Activated T-helper 2 cell treated with anti-CD3 and anti-CD28 coated beads, Interferon-gamma antibody, Interleukin-2, Interleukin-4, amounts not matched to agents 10 μg/mL and 5 μg/mL and 100 μg/mL, durations not matched to agents 14 hours and 24 hours and 36 hours (primary cell): ENCODE measurements at regions of chr14 and their contacts with region 1.

Region 1: GRCh38 chr14:97707603-97708002 is 910.4 kb downstream of the VRK1 start:
- DNase-seq: peak; percentile 22
- H3K4me3 Mint-ChIP-seq: no peak overlapping the region
- H3K27ac Mint-ChIP-seq: no peak overlapping the region
- H3K4me1 Mint-ChIP-seq: peaks cover 79% of the 10 kb centered on the region
- H3K27me3 Mint-ChIP-seq: no peaks in the 10 kb centered on the region

Region 2: DNA sequence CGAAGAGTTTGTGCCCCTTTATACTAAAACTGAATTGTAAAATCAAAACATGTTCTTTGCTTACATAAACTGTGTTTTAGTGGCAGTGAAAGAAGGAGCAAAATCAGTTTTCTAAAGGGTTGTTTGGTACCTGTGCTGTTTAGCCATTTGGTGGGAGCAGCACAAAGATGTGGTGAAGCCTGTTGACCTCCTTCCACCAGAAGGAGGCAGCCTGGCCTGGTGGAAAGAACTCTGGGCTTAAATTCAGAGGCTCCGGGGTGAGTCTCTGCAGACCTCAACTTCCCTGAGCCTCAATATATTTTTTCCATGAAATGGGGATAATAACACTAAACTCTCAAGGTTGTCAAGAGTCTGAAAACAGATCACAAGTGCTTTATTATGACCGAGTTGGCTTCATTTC is 407.9 kb before region 1 on chr14:
- intact Hi-C with region 1: loop called (anchors 10 kb)
- DNase-seq: no peak
- H3K4me3 Mint-ChIP-seq: no peak overlapping the region
- H3K27ac Mint-ChIP-seq: no peak overlapping the region
- H3K4me1 Mint-ChIP-seq: peaks cover 32% of the 10 kb centered on the region
- H3K27me3 Mint-ChIP-seq: peaks cover 13% of the 10 kb centered on the region

Region 3: GRCh38 chr14:97426776-97427282 is 280.8 kb before region 1 on chr14:
- intact Hi-C with region 1: no loop called
- DNase-seq: no peak
- H3K4me3 Mint-ChIP-seq: no peak overlapping the region
- H3K27ac Mint-ChIP-seq: no peak overlapping the region
- H3K4me1 Mint-ChIP-seq: peaks cover 2% of the 10 kb centered on the region
- H3K27me3 Mint-ChIP-seq: no peaks in the 10 kb centered on the region

Region 4: DNA sequence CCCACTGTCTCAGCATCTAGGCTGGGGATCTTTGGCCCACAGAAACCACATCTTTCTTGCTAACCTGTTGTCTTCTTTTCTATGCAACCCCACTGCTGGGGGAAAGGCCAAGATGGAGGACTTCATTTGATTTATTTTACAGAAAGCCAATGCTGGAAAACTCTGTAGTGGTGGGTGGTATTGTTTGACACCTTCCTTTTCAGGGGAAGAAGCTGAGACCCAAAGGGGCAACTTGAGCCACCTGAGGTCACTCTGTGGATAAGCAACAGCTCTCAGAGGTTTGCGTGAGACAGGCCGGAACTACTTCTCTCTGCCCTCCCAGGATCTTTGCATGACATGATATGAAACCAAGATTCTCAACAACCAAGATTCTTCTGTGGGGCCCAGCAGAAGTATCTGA is 265.2 kb before region 1 on chr14:
- intact Hi-C with region 1: loop called (anchors 2 kb)
- DNase-seq: peak; percentile 70
- H3K4me3 Mint-ChIP-seq: peak overlapping the region; percentile 65
- H3K27ac Mint-ChIP-seq: peak overlapping the region; percentile 98
- H3K4me1 Mint-ChIP-seq: peaks cover 79% of the 10 kb centered on the region
- H3K27me3 Mint-ChIP-seq: no peaks in the 10 kb centered on the region

Region 5: GRCh38 chr14:97602438-97603117 is 105.0 kb before region 1 on chr14:
- intact Hi-C with region 1: no loop called
- DNase-seq: peak; percentile 72
- H3K4me3 Mint-ChIP-seq: no peak overlapping the region
- H3K27ac Mint-ChIP-seq: no peak overlapping the region
- H3K4me1 Mint-ChIP-seq: peaks cover 29% of the 10 kb centered on the region
- H3K27me3 Mint-ChIP-seq: no peaks in the 10 kb centered on the region

Region 6: GRCh38 chr14:97634751-97635150 is 72.9 kb before region 1 on chr14:
- intact Hi-C with region 1: loop called (anchors 5 kb)
- DNase-seq: no peak
- H3K4me3 Mint-ChIP-seq: peak overlapping the region; percentile 74
- H3K27ac Mint-ChIP-seq: peak overlapping the region; percentile 53
- H3K4me1 Mint-ChIP-seq: peaks cover 41% of the 10 kb centered on the region
- H3K27me3 Mint-ChIP-seq: no peaks in the 10 kb centered on the region

Region 7: DNA sequence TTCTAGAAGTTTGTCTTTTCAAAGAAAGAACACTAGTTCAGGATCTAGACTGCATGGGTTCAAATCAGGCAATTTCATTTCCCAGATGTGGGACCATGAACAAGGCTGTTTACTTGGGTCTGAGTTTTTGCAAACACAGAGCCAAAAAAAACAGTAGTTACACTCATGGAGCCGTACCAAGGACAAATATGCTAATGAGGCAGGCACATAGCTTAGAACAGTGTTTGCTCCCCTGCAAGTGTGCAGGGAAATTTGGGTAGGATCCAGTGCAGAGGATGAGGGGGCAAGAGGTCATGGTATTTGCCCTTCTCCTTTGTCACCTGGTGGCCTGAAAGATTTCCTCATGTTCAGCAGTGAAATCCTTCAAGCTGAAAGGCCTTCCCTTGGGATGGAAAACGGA is 50.0 kb before region 1 on chr14:
- intact Hi-C with region 1: no loop called
- DNase-seq: no peak
- H3K4me3 Mint-ChIP-seq: no peak overlapping the region
- H3K27ac Mint-ChIP-seq: no peak overlapping the region
- H3K4me1 Mint-ChIP-seq: peaks cover 3% of the 10 kb centered on the region
- H3K27me3 Mint-ChIP-seq: no peaks in the 10 kb centered on the region

Region 8: DNA sequence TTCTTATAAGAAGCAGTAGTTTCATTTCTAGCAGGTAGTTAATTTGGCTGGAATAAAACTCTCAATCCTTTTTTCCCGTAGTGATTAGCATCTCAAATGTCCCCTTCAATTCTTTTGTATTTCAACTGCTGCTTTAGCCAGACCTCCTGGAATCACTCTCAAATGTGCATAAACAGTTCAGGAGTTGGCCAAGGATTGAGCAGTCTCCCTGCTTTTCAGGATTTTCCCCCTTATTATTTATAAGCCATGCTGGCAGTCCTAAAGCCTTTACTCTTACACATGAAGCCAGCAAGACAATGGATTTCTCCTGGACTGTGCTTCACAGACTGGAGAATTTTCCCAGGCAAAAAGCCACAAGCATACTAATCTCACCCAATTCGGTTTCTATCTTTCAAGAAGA is 39.7 kb after region 1 on chr14:
- intact Hi-C with region 1: no loop called
- DNase-seq: no peak
- H3K4me3 Mint-ChIP-seq: no peak overlapping the region
- H3K27ac Mint-ChIP-seq: no peak overlapping the region
- H3K4me1 Mint-ChIP-seq: no peaks in the 10 kb centered on the region
- H3K27me3 Mint-ChIP-seq: no peaks in the 10 kb centered on the region

Region 9: GRCh38 chr14:99271951-99272631 is 1564.5 kb after region 1 on chr14 and contains the start of gene BCL11B:
- intact Hi-C with region 1: loop called (anchors 5 kb)
- DNase-seq: peak; percentile 88
- H3K4me3 Mint-ChIP-seq: peak within 1 kb of the TSS; percentile 93
- H3K27ac Mint-ChIP-seq: peak within 1 kb of the TSS; percentile 94
- H3K4me1 Mint-ChIP-seq: peaks cover 37% of the 10 kb centered on the region
- H3K27me3 Mint-ChIP-seq: peaks cover 10% of the 10 kb centered on the region
- total RNA-seq, gene BCL11B: 34.1 and 34.9 TPM in 2 replicates